ENCODE measurements at regions of chr3 and their contacts with region 1.

Region 1: GRCh38 chr3:164144824-164145223 is 933.5 kb downstream of the SI start:
- DNase-seq: no peak
- H3K4me3 ChIP-seq: no peak overlapping the region
- CTCF ChIP-seq: no peak
- POLR2A ChIP-seq: no peak

Region 2: DNA sequence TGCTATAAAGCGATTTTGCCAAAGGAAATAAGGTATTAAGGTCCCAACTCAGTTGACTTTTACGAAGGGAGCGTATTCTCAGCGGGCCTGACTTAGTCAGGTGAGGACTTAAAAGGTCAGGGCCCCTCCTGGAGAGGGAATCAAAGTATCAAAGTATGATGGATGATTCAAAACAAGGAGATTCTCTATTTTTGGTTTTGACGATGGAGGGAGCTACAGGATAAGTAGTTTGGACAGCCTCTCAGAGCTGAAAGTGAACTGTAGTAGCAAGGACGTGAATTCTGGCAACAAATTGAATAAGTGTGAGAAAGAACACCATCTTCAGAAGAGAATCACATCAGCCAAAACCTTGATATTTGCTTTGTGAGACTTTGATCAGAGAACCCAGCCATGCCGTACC is 253.1 kb before region 1 on chr3:
- intact Hi-C with region 1: no loop called
- DNase-seq: no peak
- H3K4me3 ChIP-seq: no peak overlapping the region
- CTCF ChIP-seq: no peak
- POLR2A ChIP-seq: no peak

Region 3: DNA sequence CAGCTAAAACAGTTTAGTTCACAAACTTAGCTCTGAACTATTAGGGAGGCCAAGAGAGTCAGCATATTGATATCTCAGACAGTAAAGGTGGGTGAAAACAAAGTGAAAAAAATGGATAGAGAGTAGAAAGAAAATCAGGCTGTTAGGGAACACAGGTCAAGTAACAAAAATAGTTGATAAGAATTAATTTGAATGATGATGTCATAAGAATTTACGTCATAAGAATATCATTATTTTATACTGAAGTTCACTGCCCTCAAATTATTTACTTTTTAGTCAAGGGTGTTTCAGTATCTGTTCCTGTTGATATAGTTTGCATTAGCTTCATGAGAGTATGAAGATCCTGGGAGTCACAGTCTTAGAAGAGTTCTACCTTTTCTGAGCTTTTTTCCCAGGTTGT is 201.2 kb before region 1 on chr3:
- intact Hi-C with region 1: no loop called
- DNase-seq: no peak
- H3K4me3 ChIP-seq: no peak overlapping the region
- CTCF ChIP-seq: no peak
- POLR2A ChIP-seq: no peak

Region 4: GRCh38 chr3:164132878-164133277 is 11.9 kb before region 1 on chr3:
- intact Hi-C with region 1: loop called (anchors 1 kb)
- DNase-seq: no peak
- H3K4me3 ChIP-seq: no peak overlapping the region
- CTCF ChIP-seq: no peak
- POLR2A ChIP-seq: no peak

Region 5: GRCh38 chr3:164208821-164209220 is 64.0 kb after region 1 on chr3:
- intact Hi-C with region 1: no loop called
- DNase-seq: no peak
- H3K4me3 ChIP-seq: no peak overlapping the region
- CTCF ChIP-seq: no peak
- POLR2A ChIP-seq: no peak